Right cardiac atrium (tissue), 5 donors: ENCODE measurements at regions of chr12 and their contacts with region 1.

Region 1: GRCh38 chr12:121550974-121551634 is 29.7 kb downstream of the KDM2B start:
- DNase-seq: no peak
- ATAC-seq: no peak
- H3K4me3 ChIP-seq: no peak overlapping the region
- H3K27ac ChIP-seq: no peak overlapping the region
- H3K4me1 ChIP-seq: no peaks in the 10 kb centered on the region
- H3K27me3 ChIP-seq: no peaks in the 10 kb centered on the region

Region 2: GRCh38 chr12:121600702-121601336 is 49.7 kb after region 1 on chr12:
- intact Hi-C with region 1: no loop called
- DNase-seq: peak in 1 of 3 donors; percentile 12
- ATAC-seq: no peak
- H3K4me3 ChIP-seq: no peak overlapping the region
- H3K27ac ChIP-seq: no peak overlapping the region
- H3K4me1 ChIP-seq: no peaks in the 10 kb centered on the region
- H3K27me3 ChIP-seq: no peaks in the 10 kb centered on the region

Region 3: GRCh38 chr12:121620328-121620891 is 69.3 kb after region 1 on chr12:
- intact Hi-C with region 1: loop called in 3 of 4 experiments (anchors 5 to 10 kb)
- DNase-seq: peak in 1 of 3 donors; percentile 13
- ATAC-seq: peak in 1 of 2 donors; percentile 40
- H3K4me3 ChIP-seq: no peak overlapping the region
- H3K27ac ChIP-seq: no peak overlapping the region
- H3K4me1 ChIP-seq: no peaks in the 10 kb centered on the region
- H3K27me3 ChIP-seq: no peaks in the 10 kb centered on the region

Region 4: GRCh38 chr12:121668750-121669520 is 117.8 kb after region 1 on chr12:
- intact Hi-C with region 1: loop called in 2 of 4 experiments (anchors 5 kb)
- DNase-seq: peak in 1 of 3 donors; percentile 67
- ATAC-seq: no peak
- H3K4me3 ChIP-seq: no peak overlapping the region
- H3K27ac ChIP-seq: no peak overlapping the region
- H3K4me1 ChIP-seq: peaks cover 2% of the 10 kb centered on the region
- H3K27me3 ChIP-seq: no peaks in the 10 kb centered on the region